ENCODE measurements at regions of chr18 and their contacts with region 1.

Region 1: DNA sequence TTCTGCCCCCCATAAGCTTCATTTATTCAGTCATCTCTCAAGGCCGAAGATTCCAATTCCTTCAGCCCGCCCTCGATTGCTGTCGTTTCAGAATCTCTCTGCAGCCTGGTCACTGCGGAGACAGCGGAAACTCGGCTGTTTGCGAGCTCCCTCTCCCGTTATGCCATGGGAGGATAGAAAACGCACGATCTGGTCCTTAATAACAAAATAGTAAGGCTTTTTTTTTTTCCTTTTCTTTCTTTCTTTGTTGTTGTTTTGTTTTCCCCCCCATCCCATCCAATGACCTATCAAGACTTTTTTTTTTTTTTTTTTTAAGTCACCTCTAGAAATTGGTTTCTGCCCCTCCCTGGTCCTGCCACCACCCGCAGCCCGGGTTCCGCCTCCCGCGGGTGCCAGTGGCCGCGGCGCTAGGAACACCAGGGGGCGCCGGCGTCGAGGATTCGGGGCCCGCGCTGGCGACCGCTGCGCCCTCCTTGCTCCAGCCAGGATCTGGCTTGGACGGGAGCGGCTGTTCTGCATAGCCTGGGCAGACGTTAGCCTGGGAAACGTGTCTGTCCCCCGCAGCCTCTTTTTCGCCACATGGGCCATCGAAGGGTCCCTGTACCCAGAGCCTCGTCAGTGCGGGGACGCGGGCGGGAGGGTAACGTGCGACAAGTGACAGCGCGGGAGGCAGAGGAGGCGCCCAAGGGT is 10.1 kb downstream of the CPLX4 start:
- DNase-seq: peak; percentile 34 to 80
- ATAC-seq: peak; percentile 98

Region 2: DNA sequence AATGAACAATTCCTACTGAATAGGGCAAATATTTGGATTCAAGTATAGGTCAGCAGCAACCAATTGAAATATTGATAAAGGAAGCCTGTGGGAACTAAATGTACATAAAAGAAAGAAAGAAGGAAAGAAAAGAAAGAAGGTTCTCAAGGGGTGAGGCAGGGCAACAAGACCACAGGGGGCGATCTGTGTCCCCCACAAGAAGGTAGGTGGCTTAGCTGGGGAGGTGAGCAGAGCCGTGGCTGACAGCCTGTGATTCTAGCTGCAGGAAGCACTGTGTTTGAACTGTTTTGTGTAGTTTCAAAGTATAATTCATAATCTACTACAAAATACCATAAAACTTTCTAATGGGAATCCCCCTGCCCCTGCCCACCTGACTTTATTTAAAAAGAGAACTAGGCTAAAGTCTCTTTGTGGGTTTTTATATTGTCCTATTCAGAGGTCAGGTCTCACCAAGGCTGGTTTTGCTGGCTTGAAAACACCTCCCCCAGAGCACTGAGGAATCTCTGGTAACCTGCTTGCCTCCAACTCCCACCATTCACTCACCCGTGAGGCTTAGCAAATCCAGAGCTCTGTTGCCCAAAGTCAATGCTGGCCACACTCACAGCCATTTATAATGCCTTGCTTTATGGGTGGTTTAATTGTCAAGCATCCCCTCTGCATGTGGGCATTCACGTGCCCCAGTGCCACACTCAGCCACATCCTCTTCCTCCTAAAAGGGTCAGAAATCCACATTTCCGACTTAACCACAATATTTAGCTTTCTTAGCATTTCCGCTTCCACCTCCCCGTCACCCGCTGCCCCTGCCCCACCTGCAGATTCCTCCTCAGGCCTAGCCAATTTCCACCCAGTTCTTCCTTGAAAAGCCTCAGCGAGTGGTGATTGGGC is 87.1 kb after region 1 on chr18:
- intact Hi-C with region 1: loop called in 1 of 2 experiments (anchors 10 kb)
- DNase-seq: no peak
- ATAC-seq: no peak

Region 3: DNA sequence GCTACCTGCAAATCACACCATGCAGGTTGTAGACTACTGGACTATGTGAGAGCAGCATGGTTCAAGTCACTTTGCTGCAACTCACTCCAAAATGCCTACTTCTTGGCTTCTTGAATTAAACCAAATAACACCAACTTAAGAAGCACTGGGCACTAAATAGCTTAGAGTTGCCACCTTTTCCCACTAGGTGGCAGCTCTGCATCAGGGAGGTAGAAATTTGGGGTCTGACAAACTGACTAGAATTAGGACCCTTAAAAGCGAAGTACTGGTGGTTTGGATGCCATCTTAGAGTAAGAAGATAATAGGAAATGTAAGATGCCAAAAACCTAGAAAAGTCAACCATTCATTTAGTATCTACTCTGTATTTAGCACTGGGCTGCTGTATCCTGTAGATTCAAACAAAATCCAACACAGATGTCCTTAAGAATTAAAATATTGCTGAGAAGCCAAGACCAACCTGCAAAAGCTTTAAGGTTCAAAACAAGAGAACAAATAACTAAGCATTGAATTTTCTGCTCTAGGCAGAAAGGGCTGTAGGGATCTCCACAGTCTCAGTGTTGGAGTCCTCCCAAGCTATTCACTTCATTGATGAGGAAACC is 323.3 kb after region 1 on chr18:
- intact Hi-C with region 1: no loop called
- DNase-seq: no peak
- ATAC-seq: no peak

Region 4: DNA sequence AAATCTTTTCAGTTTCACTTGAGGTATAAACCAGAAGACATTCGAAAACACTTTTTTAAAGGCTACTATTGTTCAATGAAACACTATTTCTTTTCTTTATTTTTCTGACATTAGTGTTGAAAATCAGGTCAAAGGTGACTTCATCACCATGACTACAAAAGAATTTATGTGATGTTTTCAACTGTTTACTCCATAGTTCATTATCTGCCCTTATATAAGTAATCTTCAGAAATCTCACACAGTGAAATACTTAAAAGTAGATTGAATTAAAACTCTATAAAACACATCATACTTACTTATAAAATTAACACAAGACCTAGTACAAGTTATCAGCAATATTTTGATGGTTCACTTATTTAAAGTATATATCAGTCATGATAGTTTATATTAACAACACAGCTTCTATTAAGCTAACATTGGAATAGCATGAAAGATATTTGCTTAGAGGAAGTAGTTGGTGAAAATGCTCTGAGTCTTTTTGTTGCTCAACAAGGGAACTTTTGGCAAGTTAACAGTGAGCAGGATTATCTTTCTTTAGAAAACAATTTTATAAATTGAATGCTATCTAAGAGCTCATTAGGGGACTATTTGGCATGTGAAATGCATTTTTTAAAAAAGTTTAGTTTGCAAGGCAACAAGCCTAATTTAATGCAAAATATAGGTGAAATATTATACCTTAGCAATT is 1003.4 kb after region 1 on chr18:
- intact Hi-C with region 1: no loop called
- DNase-seq: no peak
- ATAC-seq: no peak

Measured in left colon (tissue), 2 donors.